Activated CD4-positive, alpha-beta T cell treated with anti-CD3 and anti-CD28 coated beads for 36 hours (primary cell): ENCODE measurements at regions of chr2 and their contacts with region 1.

Region 1: GRCh38 chr2:190880378-190881073 is at the start of gene GLS:
- DNase-seq: peak; percentile 98
- ATAC-seq: peak; percentile 81
- H3K4me3 Mint-ChIP-seq: peak within 1 kb of the TSS; percentile 79
- H3K27ac Mint-ChIP-seq: peak within 1 kb of the TSS; percentile 98
- H3K4me1 Mint-ChIP-seq: peaks cover 41% of the 10 kb centered on the region
- H3K27me3 Mint-ChIP-seq: no peaks in the 10 kb centered on the region
- total RNA-seq, gene GLS: 136 to 242 TPM

Region 2: GRCh38 chr2:190534310-190535120 is 346.0 kb before region 1 on chr2 and contains the start of gene NEMP2:
- CTCF ChIA-PET with region 1: no interaction called
- POLR2A ChIA-PET with region 1: interaction called, 4 read pairs
- intact Hi-C with region 1: loop called (anchors 5 kb)
- DNase-seq: peak; percentile 87
- ATAC-seq: peak; percentile 70
- H3K4me3 Mint-ChIP-seq: peak within 1 kb of the TSS; percentile 95
- H3K27ac Mint-ChIP-seq: peak within 1 kb of the TSS; percentile 98
- H3K4me1 Mint-ChIP-seq: peaks cover 52% of the 10 kb centered on the region
- H3K27me3 Mint-ChIP-seq: no peaks in the 10 kb centered on the region
- total RNA-seq, gene NEMP2: 24.6 to 25.1 TPM

Region 3: DNA sequence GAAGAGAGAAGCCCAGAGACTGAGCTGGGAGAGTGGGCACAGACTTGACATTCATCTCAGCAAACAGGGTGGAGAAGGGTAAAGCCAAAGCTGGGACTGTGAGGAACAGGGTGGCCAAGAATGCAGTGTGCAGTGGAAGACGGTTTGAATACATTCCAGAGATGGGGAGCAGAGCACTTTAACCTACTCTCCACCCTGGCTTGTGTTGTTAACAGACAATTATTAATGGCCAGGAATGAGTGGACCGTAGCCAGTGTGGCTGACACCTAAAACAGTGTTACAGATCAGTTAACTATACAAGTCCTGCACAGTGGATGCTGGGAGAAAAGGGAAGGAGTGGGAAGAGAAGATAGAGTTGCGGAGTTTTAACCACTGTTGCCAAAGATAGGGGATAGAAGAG is 239.1 kb before region 1 on chr2:
- CTCF ChIA-PET with region 1: no interaction called
- POLR2A ChIA-PET with region 1: no interaction called
- intact Hi-C with region 1: no loop called
- DNase-seq: no peak
- ATAC-seq: no peak
- H3K4me3 Mint-ChIP-seq: no peak overlapping the region
- H3K27ac Mint-ChIP-seq: no peak overlapping the region
- H3K4me1 Mint-ChIP-seq: peaks cover 26% of the 10 kb centered on the region
- H3K27me3 Mint-ChIP-seq: no peaks in the 10 kb centered on the region

Region 4: GRCh38 chr2:190791347-190791975 is 89.1 kb before region 1 on chr2:
- CTCF ChIA-PET with region 1: no interaction called
- POLR2A ChIA-PET with region 1: no interaction called
- intact Hi-C with region 1: loop called in 1 of 2 experiments (anchors 5 kb)
- DNase-seq: peak; percentile 73
- ATAC-seq: peak; percentile 70
- H3K4me3 Mint-ChIP-seq: peak overlapping the region; percentile 11
- H3K27ac Mint-ChIP-seq: peak overlapping the region; percentile 77
- H3K4me1 Mint-ChIP-seq: peaks cover 49% of the 10 kb centered on the region
- H3K27me3 Mint-ChIP-seq: no peaks in the 10 kb centered on the region

Region 5: DNA sequence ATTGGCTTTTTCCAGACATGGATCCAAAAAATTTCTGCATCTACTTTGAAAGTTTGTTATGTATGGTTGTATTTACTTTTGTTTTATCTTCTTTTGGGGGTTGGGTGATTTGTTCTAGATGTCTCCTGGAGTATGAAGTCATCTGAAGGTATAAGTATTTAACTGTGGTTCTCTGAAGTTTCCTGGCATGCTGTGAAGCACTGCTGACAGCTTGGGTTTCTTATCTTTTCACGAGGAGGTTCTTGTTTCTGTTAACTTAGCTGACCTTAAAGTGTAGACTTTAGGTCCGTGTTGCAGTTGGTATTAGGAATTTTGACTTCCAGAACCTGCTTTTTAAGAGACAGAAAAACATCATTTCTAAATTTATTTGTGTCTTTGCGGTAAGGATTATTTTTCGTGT is 16.0 kb after region 1 on chr2:
- CTCF ChIA-PET with region 1: interaction called, 13 read pairs
- POLR2A ChIA-PET with region 1: interaction called, 4 read pairs
- intact Hi-C with region 1: no loop called
- DNase-seq: no peak
- ATAC-seq: no peak
- H3K4me3 Mint-ChIP-seq: no peak overlapping the region
- H3K27ac Mint-ChIP-seq: peak overlapping the region; percentile 56
- H3K4me1 Mint-ChIP-seq: peaks cover 29% of the 10 kb centered on the region
- H3K27me3 Mint-ChIP-seq: no peaks in the 10 kb centered on the region

Region 6: DNA sequence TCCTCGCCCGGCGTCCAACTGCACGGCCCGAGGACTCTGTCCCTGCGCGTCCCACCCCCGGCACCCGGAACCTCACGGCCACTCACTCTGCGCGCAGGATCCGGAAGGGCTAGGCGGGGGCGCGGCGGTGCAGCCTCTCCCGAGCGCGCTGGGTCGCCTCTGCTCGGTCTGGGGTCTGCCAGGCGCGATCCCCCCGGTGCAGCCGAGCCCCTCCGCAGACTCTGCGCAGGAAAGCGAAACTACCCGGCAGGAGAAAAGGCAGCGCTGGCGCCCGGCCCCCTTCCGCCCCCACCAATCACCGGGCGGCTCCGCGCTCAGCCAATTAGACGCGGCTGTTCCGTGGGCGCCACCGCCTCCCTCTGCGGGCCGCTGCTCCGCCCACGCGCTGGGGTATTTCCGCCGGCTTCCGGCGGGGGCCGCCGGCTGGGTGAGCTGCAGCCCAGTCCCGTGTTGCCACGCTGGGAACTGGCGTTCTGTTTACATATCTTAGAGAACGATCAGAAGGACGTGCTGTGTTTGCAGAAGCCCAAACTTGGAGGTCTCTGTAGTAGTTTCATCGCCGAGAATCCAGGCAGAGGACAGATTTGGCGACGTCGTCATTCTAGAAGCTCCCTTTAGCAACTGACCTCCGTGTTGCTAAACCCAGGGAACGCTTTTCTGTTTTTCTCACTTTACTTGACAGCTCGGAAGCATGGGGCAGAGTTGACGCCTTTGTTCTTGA is 133.6 kb after region 1 on chr2 and contains the start of gene STAT1:
- CTCF ChIA-PET with region 1: no interaction called
- POLR2A ChIA-PET with region 1: interaction called, 7 read pairs
- intact Hi-C with region 1: loop called in 1 of 2 experiments (anchors 1 kb)
- DNase-seq: peak; percentile 98
- ATAC-seq: peak; percentile 79
- H3K4me3 Mint-ChIP-seq: no peak within 1 kb of the TSS
- H3K27ac Mint-ChIP-seq: no peak within 1 kb of the TSS
- H3K4me1 Mint-ChIP-seq: peaks cover 41% of the 10 kb centered on the region
- H3K27me3 Mint-ChIP-seq: no peaks in the 10 kb centered on the region
- total RNA-seq, gene STAT1: 317 to 343 TPM

Region 7: GRCh38 chr2:191086706-191087105 is 206.2 kb after region 1 on chr2:
- CTCF ChIA-PET with region 1: no interaction called
- POLR2A ChIA-PET with region 1: no interaction called
- intact Hi-C with region 1: no loop called
- DNase-seq: no peak
- ATAC-seq: no peak
- H3K4me3 Mint-ChIP-seq: no peak overlapping the region
- H3K27ac Mint-ChIP-seq: no peak overlapping the region
- H3K4me1 Mint-ChIP-seq: peaks cover 15% of the 10 kb centered on the region
- H3K27me3 Mint-ChIP-seq: no peaks in the 10 kb centered on the region

Region 8: GRCh38 chr2:191677646-191678436 is 797.3 kb after region 1 on chr2 and contains the start of gene NABP1:
- CTCF ChIA-PET with region 1: no interaction called
- POLR2A ChIA-PET with region 1: interaction called, 3 read pairs
- intact Hi-C with region 1: loop called in 1 of 2 experiments (anchors 5 kb)
- DNase-seq: peak; percentile 100
- ATAC-seq: peak; percentile 79
- H3K4me3 Mint-ChIP-seq: peak within 1 kb of the TSS; percentile 97
- H3K27ac Mint-ChIP-seq: peak within 1 kb of the TSS; percentile 99
- H3K4me1 Mint-ChIP-seq: peaks cover 45% of the 10 kb centered on the region
- H3K27me3 Mint-ChIP-seq: no peaks in the 10 kb centered on the region
- total RNA-seq, gene NABP1: 52.4 to 53.9 TPM